ENCODE measurements at regions of chr15 and their contacts with region 1.

Region 1: GRCh38 chr15:96011136-96011535 is 319.4 kb upstream of the NR2F2 start:
- DNase-seq: no peak
- H3K4me3 ChIP-seq: no peak overlapping the region
- H3K27ac ChIP-seq: no peak overlapping the region
- H3K4me1 ChIP-seq: no peaks in the 10 kb centered on the region
- H3K27me3 ChIP-seq: no peaks in the 10 kb centered on the region
- CTCF ChIP-seq: no peak
- EP300 ChIP-seq: no peak
- POLR2A ChIP-seq: no peak

Region 2: GRCh38 chr15:95957861-95958260 is 53.3 kb before region 1 on chr15:
- intact Hi-C with region 1: loop called (anchors 10 kb)
- DNase-seq: peak in 1 of 2 donors; percentile 20
- H3K4me3 ChIP-seq: no peak overlapping the region
- H3K27ac ChIP-seq: no peak overlapping the region
- H3K4me1 ChIP-seq: no peaks in the 10 kb centered on the region
- H3K27me3 ChIP-seq: no peaks in the 10 kb centered on the region
- CTCF ChIP-seq: no peak
- EP300 ChIP-seq: no peak
- POLR2A ChIP-seq: no peak

Region 3: GRCh38 chr15:96254168-96254567 is 243.0 kb after region 1 on chr15:
- intact Hi-C with region 1: no loop called
- DNase-seq: no peak
- H3K4me3 ChIP-seq: no peak overlapping the region
- H3K27ac ChIP-seq: no peak overlapping the region
- H3K4me1 ChIP-seq: no peaks in the 10 kb centered on the region
- H3K27me3 ChIP-seq: no peaks in the 10 kb centered on the region
- CTCF ChIP-seq: no peak
- EP300 ChIP-seq: no peak
- POLR2A ChIP-seq: no peak

Measured in stomach (tissue), 19 donors.